Transverse colon (tissue), 4 donors: ENCODE measurements at regions of chr12 and their contacts with region 1.

Region 1: DNA sequence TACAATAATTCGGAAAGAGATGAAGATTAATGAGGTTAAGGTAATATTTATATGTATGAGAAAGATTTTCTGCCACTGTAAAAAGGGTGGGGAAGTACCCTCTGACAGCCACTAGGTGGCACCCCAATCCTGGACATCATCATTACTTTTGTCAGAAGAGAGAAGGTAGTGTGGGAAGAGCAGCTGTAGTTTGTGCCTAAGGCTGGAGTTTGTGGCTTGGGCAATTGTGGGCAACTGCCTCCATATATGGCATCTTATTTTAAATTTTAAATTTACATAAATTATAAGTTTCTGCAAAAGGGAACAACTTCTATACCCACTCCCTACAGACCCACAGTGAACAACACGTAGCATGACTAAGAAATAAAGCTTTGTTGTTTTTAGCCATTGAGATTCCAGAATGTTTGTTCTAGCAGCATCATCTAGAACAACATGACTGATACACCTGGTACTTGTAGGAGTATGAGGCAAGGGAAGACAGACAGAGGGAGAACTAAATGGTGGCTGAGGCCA is 34.4 kb upstream of the SYCP3 start:
- DNase-seq: peak; percentile 69
- H3K4me3 ChIP-seq: no peak overlapping the region
- H3K27ac ChIP-seq: no peak overlapping the region
- H3K4me1 ChIP-seq: peaks cover 0 to 41% (median 0%) of the 10 kb centered on the region in 4 donors
- H3K27me3 ChIP-seq: no peaks in the 10 kb centered on the region
- CTCF ChIP-seq: peak; percentile 93 to 96 (median 95)
- EP300 ChIP-seq: no peak
- POLR2A ChIP-seq: no peak

Region 2: GRCh38 chr12:101407436-101408345 is 366.0 kb before region 1 on chr12 and contains the start of gene ARL1:
- in situ Hi-C with region 1: loop called in 3 of 4 experiments (anchors 10 to 25 kb)
- intact Hi-C with region 1: no loop called
- DNase-seq: peak; percentile 89
- H3K4me3 ChIP-seq: peak within 1 kb of the TSS; percentile 65 to 95 (median 69)
- H3K27ac ChIP-seq: peak within 1 kb of the TSS; percentile 92 to 98 (median 96)
- H3K4me1 ChIP-seq: peaks cover 7 to 31% (median 23%) of the 10 kb centered on the region in 4 donors
- H3K27me3 ChIP-seq: no peaks in the 10 kb centered on the region
- CTCF ChIP-seq: no peak
- EP300 ChIP-seq: no peak
- POLR2A ChIP-seq: peak; percentile 71
- total RNA-seq, gene ARL1: 5.6 to 76.1 (median 42.1) TPM

Region 3: GRCh38 chr12:101570047-101570446 is 203.7 kb before region 1 on chr12:
- in situ Hi-C with region 1: loop called in 1 of 4 experiments (anchors 25 kb)
- intact Hi-C with region 1: no loop called
- DNase-seq: no peak
- H3K4me3 ChIP-seq: no peak overlapping the region
- H3K27ac ChIP-seq: no peak overlapping the region
- H3K4me1 ChIP-seq: peaks cover 0 to 14% (median 2%) of the 10 kb centered on the region in 4 donors
- H3K27me3 ChIP-seq: no peaks in the 10 kb centered on the region
- CTCF ChIP-seq: peak; percentile 25 to 54 (median 35)
- EP300 ChIP-seq: no peak
- POLR2A ChIP-seq: no peak

Region 4: DNA sequence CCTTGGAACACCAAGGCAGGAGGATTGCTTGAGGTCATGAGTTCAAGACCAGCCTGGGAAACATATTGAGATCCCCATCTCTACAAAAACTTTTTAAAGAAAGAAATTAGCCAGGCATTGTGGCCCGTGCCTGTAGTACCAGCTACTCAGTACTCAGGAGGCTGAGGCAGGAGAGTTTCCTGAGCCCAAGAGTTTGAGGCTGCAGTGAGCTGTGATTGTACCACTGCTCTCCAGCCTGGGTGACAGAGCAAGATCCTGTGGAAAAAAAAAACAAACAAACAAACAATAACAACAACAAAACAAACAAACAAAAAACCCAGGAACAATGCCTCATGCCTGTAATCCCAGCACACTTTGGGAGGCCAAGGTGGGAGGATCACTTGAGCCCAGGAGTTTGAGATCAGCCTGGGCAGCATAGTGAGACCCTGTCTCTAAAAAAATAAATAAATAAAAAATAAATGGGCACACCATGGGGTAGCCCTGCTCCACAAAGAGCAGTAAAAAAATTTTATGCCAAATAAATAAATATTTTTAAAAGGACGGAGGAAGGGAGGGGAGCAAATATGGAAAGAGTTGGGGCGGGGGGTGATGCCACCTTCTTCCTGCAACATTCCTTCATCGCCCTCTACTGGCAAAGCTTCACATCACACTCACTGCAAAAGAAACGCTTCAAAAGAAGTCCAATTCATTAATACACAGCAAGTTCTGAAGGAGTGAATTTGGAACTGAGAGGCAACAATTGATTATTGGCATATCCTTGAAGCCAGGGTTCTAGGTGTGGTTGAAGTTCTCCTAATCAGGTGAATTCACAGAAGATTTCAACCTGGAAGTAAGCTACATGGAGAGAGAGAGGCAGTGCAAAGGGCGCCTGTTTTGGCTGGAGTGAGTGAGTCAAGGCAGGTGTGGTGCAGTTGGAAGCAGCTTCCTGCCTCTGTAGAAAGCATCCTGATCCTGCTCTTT is 65.9 kb after region 1 on chr12:
- in situ Hi-C with region 1: loop called (anchors 5 to 10 kb)
- intact Hi-C with region 1: loop called (anchors 2 kb)
- DNase-seq: peak; percentile 80
- H3K4me3 ChIP-seq: no peak overlapping the region
- H3K27ac ChIP-seq: no peak overlapping the region
- H3K4me1 ChIP-seq: peaks cover 0 to 9% (median 2%) of the 10 kb centered on the region in 4 donors
- H3K27me3 ChIP-seq: no peaks in the 10 kb centered on the region
- CTCF ChIP-seq: peak; percentile 84 to 94 (median 87)
- EP300 ChIP-seq: no peak
- POLR2A ChIP-seq: no peak

Region 5: GRCh38 chr12:102439426-102440405 is 666.0 kb after region 1 on chr12:
- in situ Hi-C with region 1: no loop called
- intact Hi-C with region 1: no loop called
- DNase-seq: no peak
- H3K4me3 ChIP-seq: no peak overlapping the region
- H3K27ac ChIP-seq: no peak overlapping the region
- H3K4me1 ChIP-seq: no peaks in the 10 kb centered on the region
- H3K27me3 ChIP-seq: no peaks in the 10 kb centered on the region
- CTCF ChIP-seq: no peak
- EP300 ChIP-seq: no peak
- POLR2A ChIP-seq: no peak